WTC11 (cell line): ENCODE measurements at regions of chr5 and their contacts with region 1.

Region 1: DNA sequence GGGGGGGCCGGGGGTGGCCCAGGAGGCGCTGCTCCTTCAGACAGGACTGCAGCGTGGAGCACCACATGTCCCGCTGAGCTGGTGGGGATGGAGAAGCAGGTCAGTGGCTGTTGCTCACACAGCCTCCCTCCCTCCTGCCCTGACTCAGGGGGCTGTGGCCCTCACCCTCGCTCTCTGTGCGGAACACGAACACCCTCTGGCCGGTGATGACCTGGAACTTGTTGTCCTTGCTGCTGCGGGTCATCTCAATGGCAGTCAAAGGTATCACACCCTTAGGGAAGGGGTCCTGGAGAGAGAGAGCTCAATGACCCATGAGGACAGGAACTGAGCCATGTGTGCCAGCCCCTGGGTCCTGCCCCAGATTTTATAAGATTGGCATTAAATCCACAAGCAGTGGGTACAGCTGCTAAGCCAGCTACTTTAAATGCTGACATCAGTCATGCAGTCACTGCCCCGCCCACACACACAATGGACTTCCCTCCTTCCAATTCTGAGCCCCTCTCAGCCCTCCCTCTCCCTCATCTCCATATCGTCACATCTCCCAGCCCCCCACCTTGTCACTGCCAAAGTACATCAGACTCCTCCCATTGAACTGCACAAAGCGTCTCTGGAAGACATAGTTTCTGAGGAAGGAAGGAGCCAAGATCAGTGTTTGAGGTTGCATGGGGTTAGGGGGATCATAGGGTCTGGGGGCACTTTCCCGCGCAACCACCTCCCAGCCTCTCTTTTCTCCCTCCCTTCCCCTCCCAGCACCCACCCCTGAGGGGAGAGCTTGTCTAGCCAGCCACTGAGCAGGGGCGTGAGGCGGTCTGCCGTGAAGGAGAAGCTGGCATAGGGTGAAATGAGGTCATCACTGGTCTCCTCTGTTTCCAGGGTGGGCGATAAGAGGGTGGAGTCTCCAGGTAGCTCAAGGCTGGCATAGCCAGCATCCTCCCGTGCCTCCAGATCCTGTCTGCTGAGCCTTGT is 8.9 kb downstream of the ARAP3 start:
- DNase-seq: no peak
- ATAC-seq: peak; percentile 2; the same call in 1 of the 2 replicates
- H3K4me3 Mint-ChIP-seq: no peak overlapping the region
- H3K27ac Mint-ChIP-seq: peak overlapping the region; percentile 42
- H3K4me1 Mint-ChIP-seq: peaks cover 32% of the 10 kb centered on the region
- H3K27me3 Mint-ChIP-seq: no peaks in the 10 kb centered on the region
- CTCF ChIP-seq: no peak

Region 2: GRCh38 chr5:141650851-141651727 is 22.0 kb before region 1 on chr5 and contains the start of gene FCHSD1:
- CTCF ChIA-PET with region 1: interaction called, 14 read pairs
- POLR2A ChIA-PET with region 1: interaction called, 5 read pairs
- DNase-seq: peak; percentile 94
- ATAC-seq: peak; percentile 95
- H3K4me3 Mint-ChIP-seq: peak within 1 kb of the TSS; percentile 99
- H3K27ac Mint-ChIP-seq: peak within 1 kb of the TSS; percentile 96
- H3K4me1 Mint-ChIP-seq: peaks cover 20% of the 10 kb centered on the region
- H3K27me3 Mint-ChIP-seq: no peaks in the 10 kb centered on the region
- CTCF ChIP-seq: no peak
- total RNA-seq, gene FCHSD1: 43.6 to 50.3 TPM (median 44.8 TPM) in 3 replicates

Region 3: DNA sequence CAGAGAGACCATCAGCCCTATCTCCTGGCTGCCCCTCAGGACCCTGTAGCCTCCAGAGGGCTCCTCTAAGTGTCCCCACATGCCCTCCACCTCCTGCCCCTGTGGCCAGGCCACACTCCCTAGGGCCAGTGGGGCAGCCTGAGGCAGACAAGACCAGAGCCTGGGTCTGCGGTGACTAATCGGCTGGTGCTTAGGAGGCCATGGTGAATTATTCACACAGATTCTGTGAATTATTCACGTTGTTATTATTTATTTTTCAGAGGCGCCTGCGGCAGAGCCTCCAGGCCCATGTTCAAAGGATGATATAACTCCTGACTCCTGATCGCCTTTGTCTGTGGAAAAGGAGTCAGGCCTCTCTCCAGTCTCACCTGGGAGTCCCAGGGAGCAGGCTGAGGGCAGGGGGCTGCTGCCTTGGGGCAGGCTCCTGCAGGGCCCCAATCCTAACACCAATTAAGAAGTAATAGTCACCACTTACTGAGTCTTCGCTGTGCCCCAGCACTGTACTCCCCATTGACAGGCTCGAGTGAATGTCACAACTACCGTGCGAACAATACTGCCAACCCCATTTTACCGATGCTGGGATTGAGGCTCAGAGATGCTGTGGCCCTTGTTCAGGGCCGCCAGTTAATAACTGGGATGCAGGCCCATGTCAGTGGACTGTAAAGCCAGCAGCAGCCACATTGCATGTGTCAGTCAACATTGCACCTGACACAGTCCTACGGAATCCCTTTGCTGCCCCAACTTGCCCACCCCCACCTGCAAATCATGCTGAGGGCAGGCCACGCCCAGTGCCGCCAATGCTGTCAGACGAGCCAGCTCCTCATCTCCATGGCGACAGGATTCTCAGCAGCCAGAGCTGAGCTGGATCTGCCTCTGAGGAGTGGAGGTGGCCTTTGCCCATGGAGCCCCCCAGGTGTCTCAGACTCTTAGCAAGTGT is 110.1 kb after region 1 on chr5:
- CTCF ChIA-PET with region 1: no interaction called
- POLR2A ChIA-PET with region 1: no interaction called
- DNase-seq: peak; percentile 48
- ATAC-seq: peak; percentile 29
- H3K4me3 Mint-ChIP-seq: no peak overlapping the region
- H3K27ac Mint-ChIP-seq: no peak overlapping the region
- H3K4me1 Mint-ChIP-seq: peaks cover 43% of the 10 kb centered on the region
- H3K27me3 Mint-ChIP-seq: no peaks in the 10 kb centered on the region
- CTCF ChIP-seq: no peak